AG04450 (cell line): ENCODE measurements at regions of chr1 and their contacts with region 1.

Region 1: DNA sequence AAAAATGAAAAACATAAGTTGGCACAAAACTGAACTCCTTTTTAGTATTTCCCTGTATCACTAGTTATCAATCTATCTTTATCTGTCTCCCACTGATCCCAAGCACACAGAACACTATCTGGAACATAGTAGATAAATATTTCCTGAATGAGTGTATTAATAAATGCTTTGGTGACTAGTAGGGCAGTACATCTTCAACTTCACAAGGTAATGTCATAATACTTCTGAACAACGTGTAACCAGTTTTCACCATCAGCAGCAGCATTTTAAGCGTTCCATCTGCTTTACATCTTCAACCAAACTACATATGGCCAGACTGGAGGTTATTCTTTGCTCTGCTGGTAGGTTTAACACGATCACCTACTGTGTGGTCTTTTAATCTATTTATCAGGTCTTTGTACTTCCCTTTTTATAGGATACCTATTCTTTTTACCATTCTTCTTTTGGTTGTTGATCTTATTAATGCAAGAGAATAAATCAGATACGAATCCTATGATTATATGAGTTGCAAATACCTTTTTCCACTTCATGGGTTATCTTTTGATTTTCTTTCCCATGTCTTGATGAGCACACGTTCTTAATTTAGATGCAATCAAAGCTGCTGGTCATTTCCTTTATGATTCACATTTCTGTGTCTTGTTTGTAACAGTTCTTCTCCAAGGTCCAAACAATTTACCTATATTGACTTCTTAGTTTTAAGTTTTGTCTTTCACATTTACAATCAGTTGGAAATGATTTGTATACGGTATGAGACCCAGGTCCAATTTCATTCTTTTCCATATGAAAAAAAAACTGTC is 16.3 kb downstream of the GPBP1L1 start:
- DNase-seq: no peak
- H3K4me3 ChIP-seq: no peak overlapping the region
- H3K27ac ChIP-seq: no peak overlapping the region
- H3K27me3 ChIP-seq: no peaks in the 10 kb centered on the region
- CTCF ChIP-seq: no peak

Region 2: DNA sequence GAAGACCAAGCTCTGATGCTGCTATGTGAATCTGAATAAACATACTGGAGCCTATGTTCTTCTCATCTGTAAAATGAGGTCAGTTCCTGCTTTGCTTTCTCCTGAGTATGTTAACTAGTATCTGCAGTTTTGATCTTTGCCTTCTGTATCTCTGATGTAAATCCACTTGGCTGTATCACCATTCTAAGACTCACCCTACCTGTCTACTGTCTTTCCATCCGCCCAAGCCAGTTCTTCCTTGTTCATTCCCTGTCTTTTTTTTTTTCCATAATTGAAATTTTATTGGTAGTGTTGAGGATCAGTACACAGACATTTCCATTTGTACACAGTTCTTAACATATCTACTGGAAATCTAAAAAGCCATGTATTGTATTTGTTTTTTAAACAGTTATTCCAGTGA is 164.6 kb after region 1 on chr1:
- CTCF ChIA-PET with region 1: interaction called, 10 read pairs
- POLR2A ChIA-PET with region 1: no interaction called
- DNase-seq: no peak
- H3K4me3 ChIP-seq: no peak overlapping the region
- H3K27ac ChIP-seq: no peak overlapping the region
- H3K27me3 ChIP-seq: no peaks in the 10 kb centered on the region
- CTCF ChIP-seq: no peak

Region 3: GRCh38 chr1:46303038-46303871 is 633.2 kb after region 1 on chr1 and contains the starts of genes LRRC41 and UQCRH:
- CTCF ChIA-PET with region 1: no interaction called
- POLR2A ChIA-PET with region 1: no interaction called
- DNase-seq: peak; percentile 95
- H3K4me3 ChIP-seq: peak within 1 kb of the TSS; percentile 86
- H3K27ac ChIP-seq: peak within 1 kb of the TSS; percentile 95
- H3K27me3 ChIP-seq: no peaks in the 10 kb centered on the region
- CTCF ChIP-seq: no peak
- polyA plus RNA-seq, gene LRRC41: 66.3 and 80.2 TPM in 2 replicates
- polyA plus RNA-seq, gene UQCRH: 611 and 757 TPM in 2 replicates